Caco-2 (cell line): ENCODE measurements at regions of chr6 and their contacts with region 1.

Region 1: DNA sequence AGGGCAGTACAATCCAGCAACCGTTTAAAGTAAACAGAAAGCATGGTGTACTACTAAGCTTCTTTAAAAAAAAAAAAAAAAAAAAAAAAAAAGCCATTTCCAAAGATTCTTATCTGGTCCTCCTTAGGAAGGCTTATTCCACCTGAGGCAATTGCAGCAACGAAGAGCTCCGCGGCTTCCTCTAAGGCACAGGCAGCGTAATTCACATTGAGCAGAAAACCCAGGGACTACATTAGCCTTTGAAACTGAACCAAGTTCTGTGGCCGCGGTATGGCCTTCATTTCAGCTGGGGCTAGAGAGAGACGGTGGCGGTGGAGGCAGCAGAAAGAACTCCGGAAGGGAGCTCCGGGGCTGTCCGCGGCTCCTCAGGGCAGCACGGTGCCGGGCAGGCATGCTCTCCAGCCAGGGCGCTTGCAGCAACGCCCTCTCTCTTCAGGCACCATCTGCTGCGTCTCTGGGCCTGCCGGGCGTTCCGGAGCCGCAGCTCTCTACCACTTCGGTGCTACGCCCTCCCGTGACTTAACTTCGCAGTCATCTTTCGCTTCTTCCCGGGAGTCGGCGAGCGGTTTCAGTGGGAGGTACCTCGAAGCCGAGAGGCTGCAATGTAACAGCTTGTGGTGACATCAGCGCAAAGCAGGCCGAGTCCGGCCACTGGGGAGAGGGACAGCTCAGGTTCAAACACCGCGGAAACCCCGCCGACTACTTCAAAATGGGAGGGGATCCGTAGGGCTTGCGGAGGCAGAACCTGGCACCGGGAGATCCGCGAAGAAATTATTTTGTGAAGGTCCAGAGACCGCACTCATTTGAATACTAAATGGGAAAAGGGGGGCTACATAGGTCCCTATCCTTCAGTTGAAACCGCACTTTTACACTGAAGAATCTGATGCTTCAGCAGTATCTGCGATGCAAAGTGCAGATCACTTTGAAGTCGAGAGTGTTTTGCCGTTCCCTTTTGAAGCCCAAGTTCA is 100.0 kb downstream of the DST start:
- DNase-seq: peak; percentile 93 to 96
- H3K4me3 ChIP-seq: peak overlapping the region; percentile 51
- H3K4me3 Mint-ChIP-seq: no peak overlapping the region
- H3K27ac Mint-ChIP-seq: no peak overlapping the region
- H3K4me1 ChIP-seq: peaks cover 41% of the 10 kb centered on the region
- H3K4me1 Mint-ChIP-seq: no peaks in the 10 kb centered on the region
- H3K27me3 ChIP-seq: no peaks in the 10 kb centered on the region
- H3K27me3 Mint-ChIP-seq: no peaks in the 10 kb centered on the region
- CTCF ChIP-seq: peak in 1 of 2 experiments; percentile 45

Region 2: DNA sequence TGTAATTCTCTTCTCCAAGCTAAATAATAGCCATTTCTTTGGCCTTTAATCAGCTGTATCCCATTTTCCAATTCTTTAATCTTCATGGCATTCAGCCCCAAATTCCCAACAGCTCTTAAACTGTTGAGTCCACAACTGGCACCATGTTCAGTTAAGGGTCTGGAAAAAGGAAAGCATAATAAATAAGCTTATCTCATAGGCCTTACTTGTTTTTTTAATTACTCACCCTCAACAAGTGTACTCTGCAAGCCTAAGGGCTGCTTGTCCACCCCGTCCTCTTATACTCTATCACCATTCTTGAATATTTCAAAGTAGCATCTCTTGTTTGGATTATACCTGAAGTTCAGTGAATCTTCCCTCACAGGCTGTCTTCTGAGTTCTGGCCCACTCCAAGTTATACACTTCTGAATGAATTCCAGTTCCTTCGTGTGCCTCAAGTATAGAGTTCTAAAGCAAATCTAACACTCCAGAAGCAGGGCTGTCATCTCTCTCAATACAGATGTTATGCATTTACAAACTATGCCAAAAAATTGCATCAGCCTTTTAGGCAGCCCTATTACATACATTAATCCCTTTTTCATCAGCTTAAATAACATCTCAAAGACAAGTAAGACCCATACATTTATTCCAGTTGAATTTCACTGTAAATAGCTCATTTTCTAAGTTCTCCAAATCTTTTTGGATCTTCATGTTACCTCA is 394.0 kb before region 1 on chr6:
- CTCF ChIA-PET with region 1: no interaction called
- POLR2A ChIA-PET with region 1: no interaction called
- intact Hi-C with region 1: no loop called
- DNase-seq: no peak
- H3K4me3 ChIP-seq: no peak overlapping the region
- H3K4me3 Mint-ChIP-seq: no peak overlapping the region
- H3K27ac Mint-ChIP-seq: no peak overlapping the region
- H3K4me1 ChIP-seq: no peaks in the 10 kb centered on the region
- H3K4me1 Mint-ChIP-seq: no peaks in the 10 kb centered on the region
- H3K27me3 ChIP-seq: no peaks in the 10 kb centered on the region
- H3K27me3 Mint-ChIP-seq: no peaks in the 10 kb centered on the region
- CTCF ChIP-seq: no peak

Region 3: GRCh38 chr6:56378996-56379618 is 163.5 kb before region 1 on chr6:
- CTCF ChIA-PET with region 1: no interaction called
- POLR2A ChIA-PET with region 1: interaction called, 13 read pairs
- intact Hi-C with region 1: no loop called
- DNase-seq: peak in 1 of 2 experiments; percentile 52
- H3K4me3 ChIP-seq: no peak overlapping the region
- H3K4me3 Mint-ChIP-seq: no peak overlapping the region
- H3K27ac Mint-ChIP-seq: peak overlapping the region; percentile 3
- H3K4me1 ChIP-seq: peaks cover 14% of the 10 kb centered on the region
- H3K4me1 Mint-ChIP-seq: peaks cover 25% of the 10 kb centered on the region
- H3K27me3 ChIP-seq: no peaks in the 10 kb centered on the region
- H3K27me3 Mint-ChIP-seq: no peaks in the 10 kb centered on the region
- CTCF ChIP-seq: no peak

Region 4: GRCh38 chr6:56399250-56399671 is 143.4 kb before region 1 on chr6:
- CTCF ChIA-PET with region 1: interaction called, 9 read pairs
- POLR2A ChIA-PET with region 1: interaction called, 10 read pairs
- intact Hi-C with region 1: loop called (anchors 1 kb)
- DNase-seq: peak; percentile 78 to 86
- H3K4me3 ChIP-seq: no peak overlapping the region
- H3K4me3 Mint-ChIP-seq: peak overlapping the region; percentile 71
- H3K27ac Mint-ChIP-seq: peak overlapping the region; percentile 97
- H3K4me1 ChIP-seq: peaks cover 36% of the 10 kb centered on the region
- H3K4me1 Mint-ChIP-seq: peaks cover 52% of the 10 kb centered on the region
- H3K27me3 ChIP-seq: no peaks in the 10 kb centered on the region
- H3K27me3 Mint-ChIP-seq: no peaks in the 10 kb centered on the region
- CTCF ChIP-seq: no peak

Region 5: DNA sequence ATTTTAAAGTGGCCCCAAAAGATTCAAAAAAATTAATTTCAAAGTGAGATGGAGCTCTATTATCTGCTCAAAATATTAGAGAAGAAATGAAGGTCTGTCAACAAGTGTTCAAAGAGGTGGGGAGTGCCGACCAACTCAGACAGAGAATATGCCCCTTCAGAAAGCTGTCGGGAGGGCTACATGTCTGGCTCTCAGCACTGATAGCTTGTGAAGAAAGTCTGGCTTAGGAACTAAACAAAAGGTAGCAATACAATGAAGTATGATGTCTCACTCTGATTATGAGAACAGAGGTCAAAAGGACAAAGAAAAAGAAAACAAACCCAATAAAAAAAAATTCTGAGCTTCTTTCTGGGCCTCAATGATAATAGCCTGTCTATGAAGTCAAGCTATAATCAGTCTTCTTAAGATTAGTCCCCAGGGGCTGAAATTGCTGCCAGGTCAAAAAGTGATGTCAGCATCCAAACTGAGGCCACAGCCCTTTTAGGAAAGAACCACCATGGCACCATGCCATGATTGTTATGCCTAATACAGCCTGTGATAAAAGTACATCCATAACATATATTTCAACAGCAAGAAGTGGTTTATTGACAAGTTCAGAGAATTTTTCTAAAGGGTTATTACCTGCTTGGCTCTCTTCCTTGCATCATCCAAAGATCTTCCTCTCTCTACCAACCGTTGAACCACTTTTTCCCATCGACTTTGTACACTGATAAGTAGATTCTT is 50.9 kb before region 1 on chr6:
- CTCF ChIA-PET with region 1: no interaction called
- POLR2A ChIA-PET with region 1: interaction called, 12 read pairs
- intact Hi-C with region 1: no loop called
- DNase-seq: no peak
- H3K4me3 ChIP-seq: no peak overlapping the region
- H3K4me3 Mint-ChIP-seq: no peak overlapping the region
- H3K27ac Mint-ChIP-seq: no peak overlapping the region
- H3K4me1 ChIP-seq: no peaks in the 10 kb centered on the region
- H3K4me1 Mint-ChIP-seq: no peaks in the 10 kb centered on the region
- H3K27me3 ChIP-seq: no peaks in the 10 kb centered on the region
- H3K27me3 Mint-ChIP-seq: no peaks in the 10 kb centered on the region
- CTCF ChIP-seq: no peak

Region 6: DNA sequence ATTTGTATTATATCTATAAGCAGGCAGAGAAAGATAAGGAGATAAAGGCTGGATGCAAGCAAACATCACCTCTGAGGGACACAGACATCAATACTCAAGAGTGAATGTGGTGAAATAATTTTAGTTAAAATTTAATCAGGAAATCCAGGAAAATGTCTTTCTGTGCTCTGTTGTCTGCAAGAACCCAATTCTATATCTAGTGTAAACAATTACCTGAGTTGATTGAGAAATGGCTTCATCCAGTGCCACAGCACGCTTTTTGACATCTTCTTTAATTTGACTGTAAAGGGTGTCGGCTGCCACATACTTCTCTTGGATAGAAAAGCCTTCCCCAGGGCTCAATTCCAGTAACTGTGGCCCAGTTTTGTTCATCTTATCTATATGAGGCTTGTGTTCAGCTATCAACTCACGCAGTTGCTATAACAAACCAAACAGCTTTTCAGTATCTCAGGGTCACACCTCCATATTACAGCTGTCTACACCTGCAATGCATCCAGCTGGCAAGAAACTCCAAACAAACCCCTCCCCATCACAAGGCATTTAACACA is 31.6 kb before region 1 on chr6:
- CTCF ChIA-PET with region 1: interaction called, 16 read pairs
- POLR2A ChIA-PET with region 1: interaction called, 17 read pairs
- intact Hi-C with region 1: loop called (anchors 1 kb)
- DNase-seq: peak; percentile 60 to 62
- H3K4me3 ChIP-seq: no peak overlapping the region
- H3K4me3 Mint-ChIP-seq: no peak overlapping the region
- H3K27ac Mint-ChIP-seq: peak overlapping the region; percentile 92
- H3K4me1 ChIP-seq: peaks cover 17% of the 10 kb centered on the region
- H3K4me1 Mint-ChIP-seq: peaks cover 21% of the 10 kb centered on the region
- H3K27me3 ChIP-seq: no peaks in the 10 kb centered on the region
- H3K27me3 Mint-ChIP-seq: no peaks in the 10 kb centered on the region
- CTCF ChIP-seq: no peak

Region 7: DNA sequence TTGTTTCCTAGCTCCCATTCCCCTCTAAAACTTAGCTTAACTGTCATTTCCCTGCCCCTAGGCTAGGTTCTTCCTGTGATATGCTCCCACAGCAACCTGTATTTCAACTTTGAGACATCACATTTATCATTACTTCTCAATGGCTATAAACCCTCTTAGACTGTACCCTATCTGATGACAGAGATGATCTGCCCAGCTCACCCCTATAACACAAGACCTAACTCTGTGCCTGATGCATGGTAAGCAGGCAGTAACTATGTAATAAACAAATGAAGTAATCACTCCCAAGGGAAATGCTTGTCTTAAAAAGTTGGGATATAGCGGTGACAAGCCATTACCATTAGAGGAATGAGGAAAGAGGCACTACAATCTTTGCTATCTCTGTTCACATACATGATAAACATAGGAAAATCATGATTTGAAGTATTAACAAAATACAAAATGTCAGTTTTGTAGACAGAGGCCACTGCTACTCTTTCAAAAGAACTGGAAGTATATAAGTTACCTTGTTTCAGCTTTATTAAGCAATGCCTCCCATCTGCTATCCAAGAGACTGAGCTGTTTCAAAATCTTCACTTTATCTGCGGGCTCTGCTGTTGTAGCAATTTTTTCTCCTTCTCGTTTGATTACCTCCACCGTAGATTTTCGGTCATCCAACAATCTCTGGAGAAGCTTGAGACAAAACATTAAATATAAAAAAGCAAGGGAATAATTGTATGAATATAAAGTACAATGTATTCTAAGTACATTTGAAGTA is 10.6 kb before region 1 on chr6:
- CTCF ChIA-PET with region 1: interaction called, 10 read pairs
- POLR2A ChIA-PET with region 1: interaction called, 3 read pairs
- intact Hi-C with region 1: no loop called
- DNase-seq: no peak
- H3K4me3 ChIP-seq: no peak overlapping the region
- H3K4me3 Mint-ChIP-seq: no peak overlapping the region
- H3K27ac Mint-ChIP-seq: no peak overlapping the region
- H3K4me1 ChIP-seq: no peaks in the 10 kb centered on the region
- H3K4me1 Mint-ChIP-seq: peaks cover 6% of the 10 kb centered on the region
- H3K27me3 ChIP-seq: no peaks in the 10 kb centered on the region
- H3K27me3 Mint-ChIP-seq: no peaks in the 10 kb centered on the region
- CTCF ChIP-seq: no peak

Region 8: DNA sequence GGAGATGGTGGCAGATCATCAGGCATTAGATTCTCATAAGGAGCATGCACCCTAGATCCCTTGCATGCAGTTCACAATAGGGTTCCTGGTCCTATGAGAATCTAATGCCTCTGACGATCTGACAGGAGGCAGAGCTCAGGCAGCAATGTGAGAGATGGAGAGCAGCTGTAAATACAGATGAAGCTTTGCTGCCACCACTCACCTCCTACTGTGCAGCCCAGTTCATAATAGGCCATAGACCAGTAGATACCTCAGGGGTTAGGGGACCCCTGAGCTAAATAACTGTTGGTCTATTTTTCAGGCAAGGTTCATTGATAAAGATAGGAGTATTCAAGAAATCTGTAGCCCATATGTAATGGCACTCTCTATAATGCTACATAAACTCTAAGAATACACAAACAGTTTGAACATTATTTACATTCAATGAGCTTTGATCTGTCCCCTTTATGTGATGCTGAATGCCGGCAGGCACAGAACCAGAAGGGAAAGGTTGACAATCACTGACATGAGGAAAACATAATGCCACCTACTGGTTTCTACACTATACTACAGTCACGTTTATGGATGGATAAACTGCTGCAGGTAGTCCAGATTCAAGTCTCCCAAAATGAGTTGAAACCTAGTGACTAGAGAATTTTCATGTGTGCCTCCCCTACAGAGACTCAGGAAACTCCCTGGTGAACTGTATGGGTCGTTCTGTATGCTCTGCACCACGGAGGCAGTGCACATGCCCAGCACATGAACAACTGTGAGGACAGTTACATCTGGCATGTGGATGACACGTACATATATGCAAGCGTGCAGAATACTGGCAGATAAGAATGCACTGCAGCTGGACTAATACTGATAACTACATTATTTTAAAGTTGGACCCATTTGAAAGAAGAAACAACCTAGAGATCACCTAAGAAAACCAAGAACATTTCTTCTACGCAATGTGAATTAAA is 28.0 kb after region 1 on chr6:
- CTCF ChIA-PET with region 1: interaction called, 17 read pairs
- POLR2A ChIA-PET with region 1: no interaction called
- intact Hi-C with region 1: no loop called
- DNase-seq: peak in 1 of 2 experiments; percentile 37
- H3K4me3 ChIP-seq: no peak overlapping the region
- H3K4me3 Mint-ChIP-seq: no peak overlapping the region
- H3K27ac Mint-ChIP-seq: no peak overlapping the region
- H3K4me1 ChIP-seq: no peaks in the 10 kb centered on the region
- H3K4me1 Mint-ChIP-seq: no peaks in the 10 kb centered on the region
- H3K27me3 ChIP-seq: no peaks in the 10 kb centered on the region
- H3K27me3 Mint-ChIP-seq: no peaks in the 10 kb centered on the region
- CTCF ChIP-seq: peak; percentile 30 to 57